ENCODE measurements at regions of chr2 and their contacts with region 1.

Region 1: DNA sequence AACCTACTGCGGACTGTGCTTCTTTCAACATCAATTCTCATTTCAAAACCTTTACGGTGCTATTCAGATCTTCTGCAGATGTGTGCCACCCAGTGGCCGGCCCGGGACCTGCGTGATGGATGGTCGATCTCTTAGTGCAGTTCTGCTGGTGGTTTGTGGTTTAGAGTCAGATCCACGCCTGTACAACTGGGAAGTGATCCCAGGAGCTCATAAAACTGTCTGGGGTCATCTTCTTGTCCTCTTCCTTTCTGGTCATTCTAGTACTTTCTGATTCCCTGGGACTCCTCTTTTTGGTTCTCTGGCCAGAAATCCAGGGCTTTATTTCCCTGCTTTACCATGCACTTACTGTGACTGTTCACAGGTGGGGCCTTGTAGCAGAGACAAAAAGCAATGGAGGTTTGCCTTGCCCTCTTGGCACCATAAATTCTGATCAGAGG is 15.8 kb upstream of the SELENOI start:
- DNase-seq: peak; percentile 66
- ATAC-seq: peak; percentile 99
- H3K4me3 Mint-ChIP-seq: no peak overlapping the region
- H3K27ac Mint-ChIP-seq: no peak overlapping the region
- H3K4me1 Mint-ChIP-seq: peaks cover 6% of the 10 kb centered on the region
- H3K27me3 Mint-ChIP-seq: no peaks in the 10 kb centered on the region
- CTCF ChIP-seq: peak; percentile 81

Region 2: DNA sequence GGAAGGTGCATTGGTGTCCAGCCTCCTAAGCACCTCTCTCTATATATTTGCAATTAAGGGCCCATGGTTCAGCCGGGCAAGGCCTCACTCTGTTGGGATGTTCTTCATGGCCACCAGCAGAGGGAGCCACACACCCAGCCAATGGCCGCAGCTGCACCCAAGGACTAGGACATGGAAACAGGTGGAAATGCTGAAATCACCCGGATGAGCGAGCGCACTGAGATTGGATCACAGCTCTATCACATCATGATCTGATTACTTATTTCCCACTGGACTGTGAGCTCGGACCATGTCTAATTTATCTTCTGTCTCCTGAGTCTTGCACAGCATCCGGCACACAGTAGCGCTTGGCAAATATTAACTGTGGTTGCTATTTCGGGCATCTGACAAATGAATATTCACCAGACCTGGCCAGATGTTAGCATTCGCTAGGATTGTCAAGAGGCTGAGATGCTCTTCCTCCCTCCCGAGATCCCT is 379.0 kb before region 1 on chr2:
- CTCF ChIA-PET with region 1: interaction called, 9 read pairs
- POLR2A ChIA-PET with region 1: interaction called, 4 read pairs
- intact Hi-C with region 1: loop called (anchors 1 kb)
- DNase-seq: peak; percentile 51
- ATAC-seq: peak; percentile 86
- H3K4me3 Mint-ChIP-seq: no peak overlapping the region
- H3K27ac Mint-ChIP-seq: no peak overlapping the region
- H3K4me1 Mint-ChIP-seq: no peaks in the 10 kb centered on the region
- H3K27me3 Mint-ChIP-seq: no peaks in the 10 kb centered on the region
- CTCF ChIP-seq: peak; percentile 68

Region 3: GRCh38 chr2:26088032-26088643 is 242.0 kb before region 1 on chr2:
- CTCF ChIA-PET with region 1: interaction called, 11 read pairs
- POLR2A ChIA-PET with region 1: no interaction called
- intact Hi-C with region 1: loop called (anchors 1 kb)
- DNase-seq: no peak
- ATAC-seq: peak; percentile 45
- H3K4me3 Mint-ChIP-seq: no peak overlapping the region
- H3K27ac Mint-ChIP-seq: no peak overlapping the region
- H3K4me1 Mint-ChIP-seq: peaks cover 53% of the 10 kb centered on the region
- H3K27me3 Mint-ChIP-seq: no peaks in the 10 kb centered on the region
- CTCF ChIP-seq: no peak

Region 4: GRCh38 chr2:26170795-26171194 is 159.3 kb before region 1 on chr2:
- CTCF ChIA-PET with region 1: interaction called, 3 read pairs
- POLR2A ChIA-PET with region 1: no interaction called
- intact Hi-C with region 1: loop called (anchors 1 kb)
- DNase-seq: no peak
- ATAC-seq: no peak
- H3K4me3 Mint-ChIP-seq: peak overlapping the region; percentile 41
- H3K27ac Mint-ChIP-seq: no peak overlapping the region
- H3K4me1 Mint-ChIP-seq: peaks cover 16% of the 10 kb centered on the region
- H3K27me3 Mint-ChIP-seq: peaks cover 40% of the 10 kb centered on the region
- CTCF ChIP-seq: no peak

Region 5: DNA sequence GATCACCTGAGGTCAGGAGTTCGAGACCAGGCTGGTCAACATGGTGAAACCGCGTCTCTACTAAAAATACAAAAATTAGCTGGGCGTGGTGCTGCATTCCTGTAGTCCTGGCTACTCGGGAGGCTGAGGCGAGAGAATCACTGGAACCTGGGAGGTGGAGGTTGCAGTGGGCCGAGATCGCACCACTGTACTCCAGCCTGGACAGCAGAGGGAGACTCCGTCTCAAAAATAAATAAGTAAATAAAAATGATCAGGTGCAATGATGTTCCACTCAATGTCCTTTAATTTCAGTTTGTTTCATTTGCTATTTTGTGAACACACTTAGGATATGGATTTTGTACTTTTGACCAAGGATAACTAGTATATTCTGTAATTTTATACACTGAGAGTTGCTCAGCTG is 95.0 kb before region 1 on chr2:
- CTCF ChIA-PET with region 1: interaction called, 6 read pairs
- POLR2A ChIA-PET with region 1: no interaction called
- intact Hi-C with region 1: loop called (anchors 1 kb)
- DNase-seq: no peak
- ATAC-seq: no peak
- H3K4me3 Mint-ChIP-seq: no peak overlapping the region
- H3K27ac Mint-ChIP-seq: no peak overlapping the region
- H3K4me1 Mint-ChIP-seq: peaks cover 8% of the 10 kb centered on the region
- H3K27me3 Mint-ChIP-seq: no peaks in the 10 kb centered on the region
- CTCF ChIP-seq: no peak

Measured in activated B cell treated with CpG ODN at 0.5 μM for 24 hours (primary cell).